Aorta (tissue), 5 donors: ENCODE measurements at regions of chr19 and their contacts with region 1.

Region 1: DNA sequence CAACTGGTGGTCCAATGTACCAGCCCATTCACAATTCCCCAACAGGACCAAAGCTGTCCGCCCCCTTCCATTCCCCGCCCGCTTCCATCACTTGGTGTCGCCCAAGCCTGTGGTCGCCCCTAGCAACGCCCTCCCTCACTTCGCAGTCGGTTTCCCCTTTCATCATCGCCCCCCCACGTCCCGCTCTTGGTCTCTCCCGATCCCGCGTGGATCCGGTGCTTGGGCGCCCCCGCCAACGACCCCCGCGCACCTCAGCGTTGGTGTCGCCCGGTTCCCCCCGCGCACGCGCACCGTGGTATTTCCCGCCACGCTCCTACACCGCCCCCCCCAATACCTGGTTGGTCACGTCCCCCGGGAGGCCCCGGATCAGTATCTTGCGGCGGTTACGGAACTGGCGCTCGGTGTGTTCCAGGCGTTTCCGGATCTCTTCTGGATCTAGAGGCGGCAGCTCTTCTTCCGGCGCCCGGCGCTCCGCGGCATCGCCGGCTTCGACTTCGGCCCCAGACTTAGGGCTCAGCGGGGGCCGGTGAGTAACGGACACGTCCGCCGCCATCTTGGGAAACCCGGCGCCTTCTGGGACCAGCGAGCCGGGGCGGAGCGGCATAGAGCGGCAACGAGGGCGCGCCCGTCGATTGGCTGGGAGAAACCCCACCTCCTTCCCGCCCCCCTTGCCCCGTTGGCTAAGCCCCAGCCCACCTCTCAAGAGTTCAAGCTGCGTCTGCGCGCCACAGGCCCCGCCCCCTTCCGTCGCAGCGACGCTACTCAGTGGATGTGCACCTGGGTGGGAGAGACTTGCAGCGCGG is at the start of gene RAVER1:
- DNase-seq: peak; percentile 98 to 99
- ATAC-seq: peak; percentile 96
- H3K4me3 ChIP-seq: peak within 1 kb of the TSS; percentile 65 to 66
- H3K27ac ChIP-seq: peak within 1 kb of the TSS in 1 of 2 donors; percentile 81
- H3K4me1 ChIP-seq: no peaks in the 10 kb centered on the region
- H3K27me3 ChIP-seq: no peaks in the 10 kb centered on the region
- total RNA-seq, gene RAVER1: 24.0 TPM

Region 2: DNA sequence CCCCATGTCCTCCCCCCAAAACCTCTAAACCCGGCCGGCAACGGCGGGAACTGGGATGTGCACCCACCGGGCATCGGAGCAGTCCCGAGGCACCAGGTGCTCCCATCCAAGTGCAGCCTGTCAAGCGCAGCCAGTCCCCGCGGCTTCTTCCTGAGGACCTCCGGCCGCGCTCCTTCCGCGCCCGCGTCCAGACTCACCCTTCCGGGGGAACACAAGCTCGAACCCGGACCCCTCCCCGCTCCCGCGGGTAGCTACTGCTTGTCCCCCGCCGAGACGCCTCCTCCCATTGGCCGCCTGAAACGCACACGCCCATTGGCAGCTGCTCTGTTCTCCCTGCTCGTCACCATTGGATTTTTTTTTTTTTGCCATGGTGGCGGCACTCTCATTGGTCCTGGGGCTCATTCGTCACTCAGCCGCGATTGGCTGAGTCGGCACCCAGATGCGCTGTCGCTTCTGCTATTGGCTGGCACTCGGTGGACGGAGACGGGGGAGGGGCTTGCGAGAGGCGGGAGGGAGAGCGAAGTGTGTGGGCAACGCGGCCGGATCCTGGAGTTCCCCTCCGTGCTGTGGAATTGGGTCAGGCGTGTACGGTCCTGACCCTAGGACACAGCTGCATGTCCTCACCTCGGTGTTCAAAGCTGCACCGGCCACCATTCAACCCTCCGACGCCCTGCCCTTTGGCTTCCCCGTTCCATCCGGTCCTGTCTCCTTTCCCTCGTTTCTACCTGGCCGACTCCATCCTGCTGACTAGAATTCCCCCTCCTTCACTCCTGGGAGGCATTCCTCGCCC is 47.4 kb after region 1 on chr19 and contains the start of gene TYK2:
- intact Hi-C with region 1: loop called (anchors 5 kb)
- DNase-seq: peak; percentile 98 to 99
- ATAC-seq: peak; percentile 99
- H3K4me3 ChIP-seq: peak within 1 kb of the TSS; percentile 52 to 84
- H3K27ac ChIP-seq: peak within 1 kb of the TSS in 1 of 2 donors; percentile 3
- H3K4me1 ChIP-seq: no peaks in the 10 kb centered on the region
- H3K27me3 ChIP-seq: no peaks in the 10 kb centered on the region
- total RNA-seq, gene TYK2: 84.5 to 128 TPM

Region 3: DNA sequence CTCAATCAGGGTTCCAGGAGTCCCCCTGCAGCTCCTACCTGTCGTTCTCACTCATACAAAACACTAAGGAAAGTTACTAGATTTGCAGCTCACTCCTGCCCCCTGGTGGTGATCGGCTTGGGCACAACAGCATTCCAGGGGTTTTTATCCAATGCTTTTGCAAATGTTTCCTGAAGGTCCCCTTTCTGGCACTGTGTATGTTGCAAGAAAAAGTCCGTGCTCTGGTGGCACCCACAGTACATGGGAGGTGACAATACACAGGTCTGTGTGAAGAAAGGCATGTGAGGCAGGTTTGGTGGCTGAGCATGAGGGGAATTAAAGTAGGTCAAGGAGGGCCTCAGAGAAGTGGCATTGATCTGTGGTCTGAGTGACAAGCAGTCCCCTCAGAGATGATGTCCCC is 55.8 kb after region 1 on chr19:
- intact Hi-C with region 1: loop called (anchors 5 kb)
- DNase-seq: peak; percentile 91 to 96
- ATAC-seq: peak; percentile 63
- H3K4me3 ChIP-seq: no peak overlapping the region
- H3K27ac ChIP-seq: no peak overlapping the region
- H3K4me1 ChIP-seq: no peaks in the 10 kb centered on the region
- H3K27me3 ChIP-seq: no peaks in the 10 kb centered on the region